ENCODE measurements at regions of chr11 and their contacts with region 1.

Region 1: GRCh38 chr11:62831520-62832335 is at the start of gene STX5:
- DNase-seq: peak; percentile 100
- H3K4me3 ChIP-seq: peak within 1 kb of the TSS; percentile 78
- H3K27ac ChIP-seq: peak within 1 kb of the TSS; percentile 96
- H3K4me1 ChIP-seq: peaks cover 57% of the 10 kb centered on the region
- H3K27me3 ChIP-seq: no peaks in the 10 kb centered on the region
- CTCF ChIP-seq: no peak
- total RNA-seq, gene STX5: 16.7 TPM

Region 2: GRCh38 chr11:62726915-62727763 is 104.6 kb before region 1 on chr11 and contains the start of gene HNRNPUL2:
- intact Hi-C with region 1: loop called (anchors 10 kb)
- DNase-seq: peak; percentile 99
- H3K4me3 ChIP-seq: peak within 1 kb of the TSS; percentile 91
- H3K27ac ChIP-seq: peak within 1 kb of the TSS; percentile 95
- H3K4me1 ChIP-seq: peaks cover 88% of the 10 kb centered on the region
- H3K27me3 ChIP-seq: no peaks in the 10 kb centered on the region
- CTCF ChIP-seq: no peak
- total RNA-seq, gene HNRNPUL2: 37.6 TPM

Measured in left ventricle myocardium inferior (tissue), 1 donor.